ENCODE measurements at regions of chr15 and their contacts with region 1.

Region 1: DNA sequence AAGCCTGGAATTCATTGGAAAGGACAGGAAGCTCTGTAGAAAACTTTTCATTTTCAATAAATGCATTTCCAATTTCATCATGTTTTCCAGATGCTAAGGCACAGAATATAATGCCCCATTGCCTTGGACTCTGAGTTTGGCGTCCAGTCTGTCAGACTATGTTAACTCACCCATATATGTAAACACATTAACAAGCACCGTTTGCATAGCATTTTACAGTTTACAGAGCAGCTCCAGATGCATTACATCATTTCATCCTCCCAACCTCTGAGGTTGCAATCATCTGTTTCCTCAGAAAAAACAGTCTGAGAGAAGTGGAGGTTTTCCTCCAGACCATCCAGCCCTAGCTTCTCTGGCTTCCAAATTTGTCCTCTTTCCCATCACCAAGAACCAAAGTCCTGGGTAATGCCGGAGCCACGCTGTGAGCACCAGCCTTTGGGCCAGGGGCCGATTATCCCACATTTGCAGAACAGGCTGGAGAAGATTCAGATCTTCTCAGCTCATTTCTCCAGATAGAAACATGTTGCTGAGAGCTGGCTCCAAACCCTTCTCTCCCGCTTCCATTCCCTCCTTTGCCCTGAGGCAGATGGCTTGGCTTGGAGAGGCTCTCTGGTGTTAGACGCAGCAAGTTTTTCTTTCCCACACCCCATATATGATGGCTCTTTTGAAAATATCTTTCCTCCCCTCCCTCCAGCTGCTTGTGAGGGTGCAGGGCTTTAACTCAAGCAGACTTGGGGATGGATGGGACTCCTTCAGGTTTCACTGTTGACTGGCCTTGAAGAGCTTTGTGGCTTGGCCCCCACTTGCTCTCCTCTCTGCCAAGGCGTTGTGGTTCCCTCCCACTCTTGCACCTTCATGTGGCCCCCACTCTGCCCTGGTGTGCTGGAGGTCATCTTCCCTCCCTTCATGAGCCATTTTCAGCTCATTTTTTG is 26.0 kb downstream of the CYP19A1 start:
- DNase-seq: no peak
- ATAC-seq: peak in 3 of 8 donors; percentile 21 to 44 (median 24)
- H3K4me3 ChIP-seq: no peak overlapping the region
- H3K27ac ChIP-seq: peak overlapping the region in 5 of 10 donors; percentile 2 to 50 (median 43)
- H3K4me1 ChIP-seq: peaks cover 0 to 56% (median 24%) of the 10 kb centered on the region in 9 donors
- H3K27me3 ChIP-seq: no peaks in the 10 kb centered on the region
- CTCF ChIP-seq: no peak

Region 2: DNA sequence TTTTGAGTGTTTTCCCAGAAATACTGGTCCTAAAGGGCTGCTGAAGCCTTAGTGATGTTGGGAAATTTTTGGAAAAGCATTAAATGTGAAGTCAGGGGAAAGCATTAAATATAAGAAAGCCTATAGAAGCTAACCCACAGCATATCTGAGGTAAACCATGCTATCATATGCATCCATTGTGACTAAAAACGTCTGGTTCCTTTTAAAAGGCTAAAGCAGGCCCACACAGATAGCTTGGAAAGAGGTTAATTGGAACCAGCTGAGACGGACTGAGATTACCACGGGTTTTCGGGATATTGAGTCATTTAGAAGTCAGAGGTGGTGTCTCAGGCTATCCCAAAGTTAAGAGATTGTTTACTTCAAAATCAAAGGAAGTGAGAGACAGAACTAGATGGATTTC is 52.2 kb before region 1 on chr15:
- intact Hi-C with region 1: no loop called
- DNase-seq: no peak
- ATAC-seq: no peak
- H3K4me3 ChIP-seq: no peak overlapping the region
- H3K27ac ChIP-seq: no peak overlapping the region
- H3K4me1 ChIP-seq: no peaks in the 10 kb centered on the region
- H3K27me3 ChIP-seq: peaks cover 0 to 3% (median 0%) of the 10 kb centered on the region in 7 donors
- CTCF ChIP-seq: no peak

Region 3: DNA sequence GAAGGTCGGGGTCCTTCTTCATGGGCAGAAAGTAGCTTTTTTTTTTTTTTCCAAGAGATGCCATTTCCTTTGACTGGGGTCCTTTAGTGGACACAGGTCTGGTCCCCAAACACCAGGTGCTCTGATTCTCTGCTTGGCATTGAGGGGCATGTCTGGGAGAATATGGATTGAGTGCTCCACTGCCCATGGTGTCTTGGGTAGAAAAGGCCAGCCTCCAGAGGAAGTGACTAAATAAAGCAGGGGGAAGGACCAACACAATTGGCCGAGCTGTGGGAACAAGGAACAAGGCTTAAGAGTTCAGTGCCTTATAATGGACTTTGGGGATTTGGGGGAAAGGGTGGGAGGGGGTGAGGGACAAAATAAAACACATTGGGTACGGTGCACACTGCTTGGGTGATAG is 19.7 kb before region 1 on chr15:
- intact Hi-C with region 1: loop called in 1 of 10 experiments (anchors 1 kb)
- DNase-seq: no peak
- ATAC-seq: no peak
- H3K4me3 ChIP-seq: no peak overlapping the region
- H3K27ac ChIP-seq: no peak overlapping the region
- H3K4me1 ChIP-seq: no peaks in the 10 kb centered on the region
- H3K27me3 ChIP-seq: no peaks in the 10 kb centered on the region
- CTCF ChIP-seq: no peak

Region 4: GRCh38 chr15:51341366-51342226 is 29.2 kb after region 1 on chr15 and contains the start of gene GLDN:
- intact Hi-C with region 1: no loop called
- DNase-seq: peak; percentile 58 to 64
- ATAC-seq: peak; percentile 71 to 93 (median 83)
- H3K4me3 ChIP-seq: peak within 1 kb of the TSS; percentile 32 to 60 (median 52)
- H3K27ac ChIP-seq: peak within 1 kb of the TSS in 9 of 10 donors; percentile 66 to 83 (median 78)
- H3K4me1 ChIP-seq: peaks cover 0 to 33% (median 15%) of the 10 kb centered on the region in 9 donors
- H3K27me3 ChIP-seq: peaks cover 0 to 26% (median 5%) of the 10 kb centered on the region in 7 donors
- CTCF ChIP-seq: no peak
- total RNA-seq, gene GLDN: 8.5 to 19.8 (median 12.4) TPM

Region 5: DNA sequence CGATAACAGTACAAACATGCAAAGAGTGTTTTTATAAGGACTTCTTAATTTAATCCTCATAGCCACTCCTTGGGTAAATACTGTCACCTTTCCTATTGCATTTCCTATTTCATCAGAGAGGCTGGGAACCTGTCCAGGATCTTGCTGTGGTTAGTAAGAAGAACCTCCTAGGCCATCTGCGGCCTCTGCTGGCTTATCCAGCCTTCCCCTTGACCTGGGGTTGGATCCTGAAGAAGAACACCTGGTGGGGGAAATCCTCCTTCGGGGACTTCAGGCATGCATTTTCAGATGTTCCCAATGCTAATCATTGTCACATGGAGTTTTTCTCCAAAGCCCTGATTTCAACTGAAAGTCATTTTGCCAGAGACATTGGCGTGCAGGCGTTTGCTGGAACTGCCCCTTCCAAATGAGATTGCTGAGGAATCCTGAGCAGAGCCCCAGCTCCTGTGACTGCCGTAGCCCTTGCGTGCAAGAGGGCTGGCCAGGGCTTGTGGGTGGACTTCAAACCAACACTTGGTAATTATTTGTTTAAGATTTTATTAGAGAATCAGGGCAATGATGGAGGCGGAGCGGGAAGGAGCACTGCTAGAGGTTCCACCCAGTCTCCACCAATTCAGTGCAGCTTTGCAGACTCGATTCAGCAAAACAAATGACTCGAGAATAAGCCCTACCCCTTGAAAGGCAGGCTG is 54.7 kb after region 1 on chr15:
- intact Hi-C with region 1: loop called in 1 of 10 experiments (anchors 10 kb)
- DNase-seq: peak in 1 of 2 donors; percentile 19
- ATAC-seq: peak in 5 of 8 donors; percentile 46 to 71 (median 56)
- H3K4me3 ChIP-seq: no peak overlapping the region
- H3K27ac ChIP-seq: peak overlapping the region in 2 of 10 donors; percentile 27
- H3K4me1 ChIP-seq: peaks cover 0 to 23% (median 6%) of the 10 kb centered on the region in 9 donors
- H3K27me3 ChIP-seq: no peaks in the 10 kb centered on the region
- CTCF ChIP-seq: peak in 1 of 9 donors; percentile 33

Region 6: DNA sequence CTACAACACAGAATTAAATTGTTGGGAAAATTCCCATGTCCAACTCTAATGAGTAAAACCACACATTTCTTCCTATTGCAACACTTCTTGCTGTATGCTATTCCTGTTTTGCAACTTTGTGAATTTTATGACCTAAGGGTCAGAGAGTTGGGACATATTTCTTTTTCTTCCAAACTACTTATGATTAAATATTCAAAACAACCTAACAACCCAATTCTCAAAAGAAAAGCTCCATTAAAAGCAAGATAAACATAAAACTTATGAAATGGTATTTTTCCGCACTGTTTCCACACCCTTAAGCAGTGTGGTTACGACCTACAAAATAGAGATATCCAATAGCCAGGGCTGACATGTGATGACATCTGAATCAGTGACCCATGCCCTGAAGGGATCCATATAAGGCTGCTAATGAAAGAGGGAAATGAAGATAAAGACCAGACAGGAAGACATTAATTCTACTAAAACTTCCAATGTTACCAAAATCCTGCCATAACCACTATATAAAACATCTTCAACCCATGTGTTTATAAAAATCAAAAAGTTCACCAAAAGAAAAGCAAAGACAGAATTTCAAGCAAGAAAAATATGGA is 264.6 kb after region 1 on chr15:
- intact Hi-C with region 1: no loop called
- DNase-seq: no peak
- ATAC-seq: peak in 4 of 8 donors; percentile 38 to 82 (median 59)
- H3K4me3 ChIP-seq: no peak overlapping the region
- H3K27ac ChIP-seq: peak overlapping the region in 3 of 10 donors; percentile 26 to 75 (median 40)
- H3K4me1 ChIP-seq: peaks cover 0 to 65% (median 0%) of the 10 kb centered on the region in 9 donors
- H3K27me3 ChIP-seq: no peaks in the 10 kb centered on the region
- CTCF ChIP-seq: no peak

Measured in heart right ventricle (tissue), 16 donors.